ENCODE measurements at regions of chr16 and their contacts with region 1.

Region 1: GRCh38 chr16:57013229-57013628 is 23.9 kb downstream of the NLRC5 start:
- DNase-seq: peak; percentile 8
- H3K4me3 Mint-ChIP-seq: peak overlapping the region; percentile 47
- H3K27ac Mint-ChIP-seq: peak overlapping the region; percentile 93
- H3K4me1 Mint-ChIP-seq: peaks cover 85% of the 10 kb centered on the region
- H3K27me3 Mint-ChIP-seq: no peaks in the 10 kb centered on the region

Region 2: GRCh38 chr16:56722200-56722842 is 290.9 kb before region 1 on chr16:
- CTCF ChIA-PET with region 1: no interaction called
- POLR2A ChIA-PET with region 1: no interaction called
- intact Hi-C with region 1: no loop called
- DNase-seq: no peak
- H3K4me3 Mint-ChIP-seq: no peak overlapping the region
- H3K27ac Mint-ChIP-seq: no peak overlapping the region
- H3K4me1 Mint-ChIP-seq: no peaks in the 10 kb centered on the region
- H3K27me3 Mint-ChIP-seq: peaks cover 2% of the 10 kb centered on the region

Region 3: DNA sequence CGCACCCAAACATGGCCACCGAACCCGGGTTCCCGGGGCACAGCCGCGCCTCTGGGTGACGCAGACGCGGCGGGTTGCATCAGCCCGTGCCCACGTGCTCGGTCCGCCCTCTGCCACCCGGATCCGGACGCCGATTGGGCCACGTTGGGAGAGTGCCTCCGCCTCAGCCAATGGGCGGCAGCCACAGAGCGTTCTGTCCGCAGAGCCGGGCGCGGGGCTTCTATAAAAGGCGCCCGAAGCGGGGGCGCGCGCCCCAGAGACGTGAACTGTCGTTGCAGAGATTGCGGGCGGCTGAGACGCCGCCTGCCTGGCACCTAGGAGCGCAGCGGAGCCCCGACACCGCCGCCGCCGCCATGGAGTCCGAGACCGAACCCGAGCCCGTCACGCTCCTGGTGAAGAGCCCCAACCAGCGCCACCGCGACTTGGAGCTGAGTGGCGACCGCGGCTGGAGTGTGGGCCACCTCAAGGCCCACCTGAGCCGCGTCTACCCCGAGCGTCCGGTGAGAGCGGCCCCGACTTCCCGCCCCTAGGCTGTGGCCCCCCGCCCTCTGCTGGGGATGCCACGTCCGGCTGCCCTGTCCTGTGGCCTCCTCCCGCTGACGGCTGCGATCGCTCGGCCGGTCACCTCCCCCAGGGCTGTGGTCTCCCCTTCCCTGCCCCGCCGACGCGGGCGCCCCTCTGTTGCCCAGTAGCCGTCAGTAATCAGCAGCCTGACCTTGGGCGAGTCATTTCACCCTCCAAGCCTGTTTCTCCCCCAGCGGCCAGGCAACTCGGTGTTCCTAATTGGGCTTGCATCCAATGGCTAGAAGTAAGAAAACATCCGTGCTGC is 81.1 kb before region 1 on chr16 and contains the start of gene HERPUD1:
- CTCF ChIA-PET with region 1: no interaction called
- POLR2A ChIA-PET with region 1: interaction called, 5 read pairs
- intact Hi-C with region 1: loop called (anchors 2 kb)
- DNase-seq: peak; percentile 100
- H3K4me3 Mint-ChIP-seq: peak within 1 kb of the TSS; percentile 98
- H3K27ac Mint-ChIP-seq: peak within 1 kb of the TSS; percentile 98
- H3K4me1 Mint-ChIP-seq: peaks cover 36% of the 10 kb centered on the region
- H3K27me3 Mint-ChIP-seq: no peaks in the 10 kb centered on the region
- total RNA-seq, gene HERPUD1: 159 TPM

Region 4: GRCh38 chr16:56944954-56945839 is 68.0 kb before region 1 on chr16:
- CTCF ChIA-PET with region 1: no interaction called
- POLR2A ChIA-PET with region 1: no interaction called
- intact Hi-C with region 1: loop called (anchors 1 kb)
- DNase-seq: peak; percentile 60
- H3K4me3 Mint-ChIP-seq: no peak overlapping the region
- H3K27ac Mint-ChIP-seq: peak overlapping the region; percentile 94
- H3K4me1 Mint-ChIP-seq: peaks cover 55% of the 10 kb centered on the region
- H3K27me3 Mint-ChIP-seq: no peaks in the 10 kb centered on the region

Region 5: DNA sequence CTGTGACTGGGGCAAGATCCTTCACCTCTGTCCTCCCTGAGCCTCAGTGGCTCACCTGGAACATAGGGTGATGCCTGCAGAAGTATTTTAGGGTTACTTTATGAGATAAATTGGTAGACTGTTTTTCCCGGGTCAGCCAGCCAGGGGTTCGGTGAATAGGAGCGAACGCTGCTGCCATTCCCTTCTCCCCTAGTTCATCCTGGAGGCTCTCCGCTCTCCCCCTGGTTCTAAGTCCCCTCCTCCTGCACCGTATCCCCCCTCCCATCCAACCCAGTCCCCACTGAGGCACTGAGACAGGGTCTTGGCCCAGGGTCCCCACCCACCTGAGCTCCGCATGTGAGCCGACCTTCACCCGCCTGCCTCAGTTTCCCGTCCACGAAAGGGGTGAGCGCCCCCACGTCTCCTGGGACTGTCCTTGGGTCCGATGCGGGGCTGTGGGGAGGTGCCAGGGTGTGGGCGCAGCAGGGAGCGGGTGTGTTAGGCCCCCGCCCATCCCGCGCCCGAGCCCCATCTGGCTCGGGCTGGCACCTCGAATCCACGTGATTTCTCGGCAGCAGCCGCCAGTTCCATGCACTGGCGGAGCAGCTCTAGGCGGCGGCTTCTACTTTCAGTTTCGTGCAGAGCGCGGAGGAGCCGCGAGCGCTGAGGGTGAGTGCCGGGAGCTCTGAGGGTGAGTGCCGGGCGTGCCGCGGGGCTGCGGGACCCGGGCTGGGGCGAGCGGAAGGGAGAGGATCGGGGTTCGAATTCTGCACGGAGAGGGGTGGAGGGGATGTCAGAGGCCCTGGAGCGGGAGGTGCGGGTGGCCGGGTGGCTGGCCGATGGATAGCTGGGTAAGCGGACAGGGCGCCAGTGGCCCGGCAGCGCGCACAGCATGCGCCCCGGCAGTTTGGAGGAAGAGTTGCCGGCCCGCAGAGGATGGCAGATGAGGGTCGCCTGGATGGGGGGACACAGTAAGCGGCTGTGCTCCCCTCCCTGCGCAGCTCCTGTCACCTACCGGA is 24.0 kb before region 1 on chr16 and contains the start of gene NLRC5:
- CTCF ChIA-PET with region 1: interaction called, 10 read pairs
- POLR2A ChIA-PET with region 1: interaction called, 11 read pairs
- intact Hi-C with region 1: loop called (anchors 1 kb)
- DNase-seq: peak; percentile 94
- H3K4me3 Mint-ChIP-seq: peak within 1 kb of the TSS; percentile 96
- H3K27ac Mint-ChIP-seq: peak within 1 kb of the TSS; percentile 99
- H3K4me1 Mint-ChIP-seq: peaks cover 66% of the 10 kb centered on the region
- H3K27me3 Mint-ChIP-seq: no peaks in the 10 kb centered on the region
- total RNA-seq, gene NLRC5: 151 to 167 TPM

Region 6: DNA sequence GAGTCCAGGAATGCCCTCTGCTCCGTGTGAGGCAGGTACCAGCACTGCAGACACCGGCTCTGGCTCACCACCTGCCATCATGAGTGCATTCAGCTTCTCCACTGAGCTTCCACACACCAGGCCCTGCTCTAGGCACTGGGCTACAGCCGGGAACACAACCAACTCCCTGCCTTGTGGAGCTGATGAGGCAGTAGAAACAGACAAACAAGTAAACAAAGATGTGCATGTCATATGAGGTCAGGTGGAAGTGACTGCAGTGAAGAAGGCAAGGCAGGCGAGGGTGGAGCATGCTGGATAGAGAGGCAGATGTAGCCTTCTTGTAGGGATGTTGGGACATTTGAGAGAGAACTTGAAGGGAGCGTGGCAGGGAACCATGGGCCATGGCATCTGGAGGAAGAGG is 18.9 kb before region 1 on chr16:
- CTCF ChIA-PET with region 1: interaction called, 10 read pairs
- POLR2A ChIA-PET with region 1: interaction called, 16 read pairs
- intact Hi-C with region 1: loop called (anchors 1 kb)
- DNase-seq: peak; percentile 25
- H3K4me3 Mint-ChIP-seq: peak overlapping the region; percentile 62
- H3K27ac Mint-ChIP-seq: peak overlapping the region; percentile 99
- H3K4me1 Mint-ChIP-seq: peaks cover 68% of the 10 kb centered on the region
- H3K27me3 Mint-ChIP-seq: no peaks in the 10 kb centered on the region

Region 7: GRCh38 chr16:57000271-57001025 is 12.8 kb before region 1 on chr16:
- CTCF ChIA-PET with region 1: interaction called, 10 read pairs
- POLR2A ChIA-PET with region 1: interaction called, 16 read pairs
- intact Hi-C with region 1: loop called (anchors 1 kb)
- DNase-seq: peak; percentile 86
- H3K4me3 Mint-ChIP-seq: peak overlapping the region; percentile 64
- H3K27ac Mint-ChIP-seq: peak overlapping the region; percentile 99
- H3K4me1 Mint-ChIP-seq: peaks cover 95% of the 10 kb centered on the region
- H3K27me3 Mint-ChIP-seq: no peaks in the 10 kb centered on the region

Region 8: GRCh38 chr16:57039148-57039812 is 26.1 kb after region 1 on chr16:
- CTCF ChIA-PET with region 1: interaction called, 7 read pairs
- POLR2A ChIA-PET with region 1: interaction called, 8 read pairs
- intact Hi-C with region 1: loop called (anchors 1 kb)
- DNase-seq: peak; percentile 65
- H3K4me3 Mint-ChIP-seq: peak overlapping the region; percentile 27
- H3K27ac Mint-ChIP-seq: peak overlapping the region; percentile 98
- H3K4me1 Mint-ChIP-seq: peaks cover 88% of the 10 kb centered on the region
- H3K27me3 Mint-ChIP-seq: no peaks in the 10 kb centered on the region